MCF 10A (cell line): ENCODE measurements at regions of chr1 and their contacts with region 1.

Region 1: DNA sequence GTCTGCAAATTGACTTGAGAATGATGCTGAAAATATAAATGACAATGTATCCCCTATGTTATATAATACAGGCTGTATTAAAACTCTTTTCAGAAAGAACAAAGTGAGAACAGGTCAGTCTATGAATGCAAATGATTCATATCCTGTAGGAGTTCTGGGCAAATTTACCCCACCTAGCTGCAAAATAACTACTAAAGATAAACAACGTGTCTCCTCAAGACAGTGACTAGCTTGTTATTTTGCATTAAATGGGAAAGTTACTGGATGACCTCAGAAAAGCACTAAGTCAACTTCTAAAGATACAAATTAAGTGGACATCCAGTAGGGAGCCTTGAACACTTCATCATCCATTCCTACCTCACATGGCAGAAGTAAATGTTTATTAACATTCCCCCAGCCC is 11.1 kb downstream of the RNF19B start:
- DNase-seq: peak; percentile 70
- H3K4me3 Mint-ChIP-seq: no peak overlapping the region
- H3K27ac Mint-ChIP-seq: peak overlapping the region; percentile 87
- H3K4me1 Mint-ChIP-seq: peaks cover 14% of the 10 kb centered on the region
- H3K27me3 Mint-ChIP-seq: no peaks in the 10 kb centered on the region
- CTCF ChIP-seq: no peak

Region 2: DNA sequence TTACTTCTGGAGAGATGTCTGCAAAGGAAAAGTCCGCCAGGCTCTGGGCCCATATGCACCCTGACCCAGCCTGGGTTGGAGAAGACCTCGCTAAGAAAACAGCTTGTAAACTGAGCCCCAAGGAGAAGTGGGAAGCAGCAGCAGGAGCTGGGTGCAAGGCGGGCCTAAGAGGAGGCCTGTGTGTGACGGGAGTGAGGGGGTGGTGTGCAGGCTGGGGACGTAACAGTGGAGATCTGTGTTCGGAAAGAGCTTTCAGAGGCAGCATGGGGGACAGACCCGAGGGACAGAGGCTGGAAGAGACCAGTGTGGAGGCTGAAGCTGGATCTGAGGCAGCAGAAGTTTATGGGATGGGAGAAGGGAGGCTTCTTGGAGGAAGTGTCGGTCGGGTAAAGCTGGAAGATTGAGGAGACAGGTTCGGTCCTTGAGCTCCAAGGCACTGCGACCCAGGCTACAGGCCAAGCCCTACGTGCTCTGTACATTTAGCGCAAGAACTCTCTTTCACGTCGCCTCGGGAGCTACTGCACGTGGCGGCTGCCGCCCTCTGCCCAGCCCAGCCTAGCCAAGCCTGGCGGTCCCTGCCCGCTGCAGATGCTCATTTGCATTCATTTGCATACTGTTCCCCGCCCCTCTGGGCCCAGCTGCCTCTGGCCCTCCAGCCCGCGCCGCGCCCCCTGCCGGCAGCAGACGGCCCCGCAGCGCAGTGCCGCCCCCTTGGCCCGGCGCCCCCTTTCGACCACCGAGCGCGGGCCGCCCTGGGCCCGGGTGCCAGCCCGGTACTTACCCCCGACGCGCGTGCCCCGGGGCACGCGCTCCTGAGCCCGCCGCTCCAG is 60.9 kb before region 1 on chr1:
- CTCF ChIA-PET with region 1: no interaction called
- POLR2A ChIA-PET with region 1: no interaction called
- intact Hi-C with region 1: no loop called
- DNase-seq: no peak
- H3K4me3 Mint-ChIP-seq: no peak overlapping the region
- H3K27ac Mint-ChIP-seq: no peak overlapping the region
- H3K4me1 Mint-ChIP-seq: no peaks in the 10 kb centered on the region
- H3K27me3 Mint-ChIP-seq: peaks cover 44% of the 10 kb centered on the region
- CTCF ChIP-seq: peak; percentile 25

Region 3: DNA sequence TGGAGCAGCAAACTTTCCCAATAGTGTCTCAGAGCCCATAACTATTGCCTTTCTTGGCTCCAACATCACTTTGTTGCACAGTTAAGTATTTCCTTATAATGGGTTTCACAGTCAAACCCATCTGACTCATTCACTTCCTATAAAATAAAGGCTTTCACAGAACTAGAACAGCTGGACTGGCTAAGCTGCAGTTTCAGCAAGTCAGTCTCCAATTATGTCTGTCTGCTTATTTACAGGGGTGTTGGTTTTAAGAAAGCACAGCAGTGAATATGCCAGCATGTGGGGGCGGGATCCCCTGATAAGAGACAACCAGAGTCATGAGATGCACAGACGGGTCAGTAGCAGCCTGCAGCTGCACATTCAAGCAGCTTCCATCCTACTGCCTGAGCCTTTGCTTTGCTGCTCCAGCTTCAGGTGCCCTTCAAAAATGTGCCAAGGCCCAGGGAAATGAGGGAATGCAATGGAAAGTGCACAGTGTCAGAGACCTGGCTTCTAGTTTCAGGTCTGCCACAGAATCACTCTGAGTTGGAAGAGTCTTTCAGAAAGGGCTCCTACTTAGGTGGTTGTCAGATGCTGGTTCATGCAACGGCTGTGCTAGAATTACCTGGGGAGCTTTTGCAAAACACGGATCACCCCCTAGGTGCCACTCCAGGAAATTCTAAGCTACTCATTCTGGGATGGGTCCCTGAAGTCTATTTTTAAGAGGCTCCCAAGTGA is 13.7 kb before region 1 on chr1:
- CTCF ChIA-PET with region 1: interaction called, 11 read pairs
- POLR2A ChIA-PET with region 1: interaction called, 10 read pairs
- intact Hi-C with region 1: no loop called
- DNase-seq: peak; percentile 83
- H3K4me3 Mint-ChIP-seq: no peak overlapping the region
- H3K27ac Mint-ChIP-seq: peak overlapping the region; percentile 81
- H3K4me1 Mint-ChIP-seq: peaks cover 9% of the 10 kb centered on the region
- H3K27me3 Mint-ChIP-seq: no peaks in the 10 kb centered on the region
- CTCF ChIP-seq: no peak

Region 4: GRCh38 chr1:32964461-32965250 is 11.2 kb after region 1 on chr1 and contains the start of gene RNF19B:
- CTCF ChIA-PET with region 1: interaction called, 8 read pairs
- POLR2A ChIA-PET with region 1: interaction called, 43 read pairs
- intact Hi-C with region 1: loop called (anchors 1 kb)
- DNase-seq: peak; percentile 95
- H3K4me3 Mint-ChIP-seq: peak within 1 kb of the TSS; percentile 84
- H3K27ac Mint-ChIP-seq: peak within 1 kb of the TSS; percentile 69
- H3K4me1 Mint-ChIP-seq: peaks cover 29% of the 10 kb centered on the region
- H3K27me3 Mint-ChIP-seq: no peaks in the 10 kb centered on the region
- CTCF ChIP-seq: no peak
- total RNA-seq, gene RNF19B: 38.0 and 41.3 TPM in 2 replicates

Region 5: DNA sequence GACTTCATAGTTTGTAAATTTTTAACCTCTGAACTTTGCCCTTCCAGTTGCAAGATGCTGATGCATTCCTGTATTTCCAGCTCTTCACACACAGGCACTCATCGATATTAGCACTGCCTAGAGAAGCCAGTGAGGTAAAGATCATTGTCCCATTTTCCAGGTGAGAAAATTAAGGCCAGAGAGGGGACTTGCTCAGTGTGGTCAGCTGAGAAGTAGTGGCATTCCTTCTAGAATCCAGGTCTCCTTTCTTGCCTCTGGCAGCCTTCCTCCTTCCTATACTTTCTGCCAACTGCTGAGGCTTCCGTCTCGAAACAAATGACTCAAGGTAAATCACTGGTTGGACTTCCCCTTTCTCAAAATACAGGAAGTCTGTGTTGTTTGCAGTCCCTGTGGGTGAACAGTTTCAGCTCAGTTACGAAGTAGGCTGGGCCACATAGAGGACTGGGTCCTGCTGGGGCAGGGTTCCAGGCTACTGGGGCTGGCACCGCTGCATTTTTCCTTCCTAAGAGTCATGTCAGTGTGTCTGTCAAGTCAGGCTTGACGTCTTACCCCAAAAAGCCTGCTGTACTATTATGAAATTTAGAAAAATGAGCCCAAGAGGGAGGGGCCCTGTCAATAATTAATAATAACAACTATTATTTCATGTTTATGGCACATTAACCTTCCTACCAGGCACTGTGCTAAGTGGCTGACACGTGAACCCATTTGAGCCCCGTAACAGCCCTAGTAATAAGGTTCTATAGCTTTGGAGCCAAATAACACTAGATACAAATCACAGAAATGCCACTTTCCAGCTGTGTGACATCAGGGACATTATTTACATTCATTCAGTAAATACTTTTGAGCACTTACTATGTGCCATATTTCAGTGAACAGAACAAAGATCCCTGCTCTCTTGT is 27.8 kb after region 1 on chr1:
- CTCF ChIA-PET with region 1: no interaction called
- POLR2A ChIA-PET with region 1: interaction called, 255 read pairs
- intact Hi-C with region 1: no loop called
- DNase-seq: peak; percentile 95
- H3K4me3 Mint-ChIP-seq: peak overlapping the region; percentile 6
- H3K27ac Mint-ChIP-seq: peak overlapping the region; percentile 95
- H3K4me1 Mint-ChIP-seq: peaks cover 14% of the 10 kb centered on the region
- H3K27me3 Mint-ChIP-seq: no peaks in the 10 kb centered on the region
- CTCF ChIP-seq: no peak

Region 6: GRCh38 chr1:33384040-33384812 is 430.7 kb after region 1 on chr1:
- CTCF ChIA-PET with region 1: no interaction called
- POLR2A ChIA-PET with region 1: no interaction called
- intact Hi-C with region 1: no loop called
- DNase-seq: peak; percentile 57
- H3K4me3 Mint-ChIP-seq: no peak overlapping the region
- H3K27ac Mint-ChIP-seq: peak overlapping the region; percentile 61
- H3K4me1 Mint-ChIP-seq: peaks cover 42% of the 10 kb centered on the region
- H3K27me3 Mint-ChIP-seq: no peaks in the 10 kb centered on the region
- CTCF ChIP-seq: no peak

Region 7: GRCh38 chr1:33430692-33431593 is 477.4 kb after region 1 on chr1 and contains the start of gene PHC2:
- CTCF ChIA-PET with region 1: no interaction called
- POLR2A ChIA-PET with region 1: no interaction called
- intact Hi-C with region 1: no loop called
- DNase-seq: peak; percentile 97
- H3K4me3 Mint-ChIP-seq: no peak within 1 kb of the TSS
- H3K27ac Mint-ChIP-seq: no peak within 1 kb of the TSS
- H3K4me1 Mint-ChIP-seq: peaks cover 21% of the 10 kb centered on the region
- H3K27me3 Mint-ChIP-seq: no peaks in the 10 kb centered on the region
- CTCF ChIP-seq: no peak
- total RNA-seq, gene PHC2: 117 and 137 TPM in 2 replicates